Heart left ventricle (tissue), 16 donors: ENCODE measurements at regions of chr17 and their contacts with region 1.

Region 1: DNA sequence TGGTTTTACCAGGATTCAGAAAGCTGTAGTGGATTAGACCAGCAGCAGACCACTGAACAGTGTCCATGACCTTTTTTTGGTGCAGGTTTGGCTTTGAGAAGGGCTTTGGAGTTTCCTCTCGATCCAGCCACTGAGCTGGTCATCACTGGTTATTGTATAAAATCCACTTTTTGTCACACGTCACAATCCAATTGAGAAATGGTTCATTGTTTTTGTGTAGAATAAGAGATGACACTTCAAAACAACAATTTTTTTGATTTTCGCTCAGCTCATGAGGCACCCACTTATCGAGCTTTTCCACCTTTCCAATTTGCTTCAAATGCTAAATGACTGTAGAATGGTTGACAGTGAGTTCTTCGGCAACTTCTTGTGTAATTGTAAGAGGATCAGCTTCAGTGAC is 515.4 kb upstream of the TOM1L1 start:
- DNase-seq: no peak
- ATAC-seq: no peak
- H3K4me3 ChIP-seq: no peak overlapping the region
- H3K27ac ChIP-seq: no peak overlapping the region
- H3K4me1 ChIP-seq: no peaks in the 10 kb centered on the region
- H3K27me3 ChIP-seq: no peaks in the 10 kb centered on the region
- CTCF ChIP-seq: no peak
- POLR2A ChIP-seq: no peak

Region 2: DNA sequence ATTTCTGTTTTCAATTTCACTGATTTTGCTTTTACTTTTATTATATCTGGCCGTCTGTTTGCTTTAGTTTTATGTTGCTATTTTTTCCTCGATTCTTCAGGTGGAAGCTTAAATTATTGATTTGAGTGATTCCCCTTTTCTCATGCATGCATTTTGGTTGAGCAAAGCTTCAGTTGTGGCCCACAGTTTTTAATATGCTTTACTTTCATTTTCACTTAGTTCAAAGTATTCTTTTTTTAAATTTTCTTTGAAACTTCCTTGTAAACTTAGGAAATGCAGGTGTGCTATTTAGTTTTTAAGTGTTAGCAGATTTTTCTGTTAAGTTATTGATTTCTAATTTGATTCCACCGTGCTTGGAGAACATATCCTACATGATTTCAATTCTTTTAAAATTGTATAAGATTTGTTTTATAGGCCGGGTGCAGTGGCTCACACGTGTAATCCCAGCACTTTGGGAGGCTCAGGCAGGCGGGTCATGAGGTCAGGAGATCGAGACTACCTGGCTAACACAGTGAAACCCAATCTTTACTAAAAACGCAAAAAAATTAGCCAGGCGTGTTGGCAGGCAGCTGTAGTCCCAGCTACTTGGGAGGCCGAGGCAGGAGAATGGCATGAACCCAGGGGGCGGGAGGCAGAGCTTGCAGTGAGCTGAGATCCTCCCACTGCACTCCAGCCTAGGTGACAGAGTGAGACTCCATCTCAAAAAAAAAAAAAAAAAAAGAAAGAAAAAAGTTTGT is 31.3 kb before region 1 on chr17:
- intact Hi-C with region 1: loop called in 1 of 10 experiments (anchors 5 kb)
- DNase-seq: no peak
- ATAC-seq: no peak
- H3K4me3 ChIP-seq: no peak overlapping the region
- H3K27ac ChIP-seq: no peak overlapping the region
- H3K4me1 ChIP-seq: no peaks in the 10 kb centered on the region
- H3K27me3 ChIP-seq: no peaks in the 10 kb centered on the region
- CTCF ChIP-seq: no peak
- POLR2A ChIP-seq: no peak